ENCODE measurements at regions of chr7 and their contacts with region 1.

Region 1: GRCh38 chr7:40604601-40605438 is 470.0 kb downstream of the SUGCT start:
- DNase-seq: peak; percentile 27
- H3K4me3 Mint-ChIP-seq: no peak overlapping the region
- H3K27ac Mint-ChIP-seq: no peak overlapping the region
- H3K4me1 Mint-ChIP-seq: no peaks in the 10 kb centered on the region
- H3K27me3 Mint-ChIP-seq: no peaks in the 10 kb centered on the region

Region 2: DNA sequence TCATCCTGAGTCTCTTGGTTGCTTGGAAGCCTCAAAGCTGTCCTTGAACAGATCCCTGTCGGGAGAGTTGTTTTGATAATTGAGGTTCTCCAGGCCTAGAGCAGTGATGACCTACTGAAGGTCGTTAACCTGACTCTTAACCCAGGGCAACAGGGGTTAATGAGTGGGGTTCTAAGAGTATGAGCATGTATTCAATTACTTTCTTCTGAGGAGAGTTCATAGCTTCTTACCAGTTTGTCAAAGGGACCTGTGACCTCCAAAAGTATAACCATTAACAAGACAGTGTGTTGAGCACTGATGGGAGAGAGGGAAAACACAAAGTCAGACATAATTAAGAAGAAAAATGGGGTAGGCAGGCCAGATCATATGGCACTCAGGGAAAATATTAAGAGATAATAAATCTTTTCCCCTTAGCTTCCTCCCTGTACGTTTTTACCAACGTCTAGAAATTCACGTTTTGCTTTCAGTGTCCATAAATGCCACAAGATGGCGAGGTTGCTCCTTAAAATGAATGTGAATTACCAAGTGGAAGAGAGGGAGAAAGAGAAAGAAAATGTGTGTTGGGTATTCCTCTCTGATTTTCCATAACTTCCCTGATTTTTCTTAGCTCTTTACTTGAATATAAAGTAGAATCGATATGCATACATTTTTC is 372.5 kb before region 1 on chr7:
- CTCF ChIA-PET with region 1: interaction called, 14 read pairs
- DNase-seq: peak; percentile 34
- H3K4me3 Mint-ChIP-seq: no peak overlapping the region
- H3K27ac Mint-ChIP-seq: no peak overlapping the region
- H3K4me1 Mint-ChIP-seq: peaks cover 8% of the 10 kb centered on the region
- H3K27me3 Mint-ChIP-seq: no peaks in the 10 kb centered on the region

Region 3: DNA sequence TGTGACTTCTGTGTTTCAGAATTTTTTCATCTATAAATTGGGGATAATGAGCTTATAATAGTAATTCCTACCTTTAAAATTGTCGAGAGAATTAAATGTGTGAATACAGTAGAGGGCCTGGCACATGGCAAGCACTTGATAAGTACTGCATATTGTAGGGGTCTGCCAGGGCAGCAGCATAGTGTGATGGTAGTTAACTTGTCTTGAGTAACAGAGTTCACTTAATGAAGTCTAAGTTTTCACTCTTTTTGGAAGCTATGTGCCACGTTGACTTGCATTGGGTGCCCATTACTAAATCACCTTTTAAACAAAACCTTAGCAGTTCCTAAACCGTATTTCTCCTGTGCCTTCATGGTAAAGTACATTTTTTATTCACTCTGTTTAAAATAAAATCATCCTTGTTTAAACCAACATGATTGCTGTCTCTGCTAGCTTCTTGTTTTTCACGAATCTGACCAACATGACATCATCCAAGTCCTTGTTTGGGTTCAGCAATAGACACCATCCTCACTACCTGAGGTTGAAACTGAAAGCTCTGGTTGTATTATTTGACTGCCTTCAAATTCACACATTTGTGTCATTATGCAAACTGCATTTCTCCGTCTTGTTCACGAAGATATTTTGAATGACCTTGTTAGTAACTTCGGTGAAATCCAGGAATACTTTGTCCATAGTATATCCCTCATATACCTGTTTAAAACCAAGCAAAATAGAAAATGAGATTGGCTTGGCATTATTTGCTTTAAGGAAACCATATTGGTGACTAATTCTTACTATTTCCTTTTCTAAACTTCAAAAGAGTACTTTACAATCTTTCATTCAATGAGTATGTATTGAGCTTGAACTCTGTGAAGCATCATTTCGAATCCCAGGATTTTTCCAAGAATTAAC is 129.8 kb before region 1 on chr7:
- CTCF ChIA-PET with region 1: no interaction called
- DNase-seq: no peak
- H3K4me3 Mint-ChIP-seq: no peak overlapping the region
- H3K27ac Mint-ChIP-seq: no peak overlapping the region
- H3K4me1 Mint-ChIP-seq: peaks cover 12% of the 10 kb centered on the region
- H3K27me3 Mint-ChIP-seq: no peaks in the 10 kb centered on the region

Region 4: DNA sequence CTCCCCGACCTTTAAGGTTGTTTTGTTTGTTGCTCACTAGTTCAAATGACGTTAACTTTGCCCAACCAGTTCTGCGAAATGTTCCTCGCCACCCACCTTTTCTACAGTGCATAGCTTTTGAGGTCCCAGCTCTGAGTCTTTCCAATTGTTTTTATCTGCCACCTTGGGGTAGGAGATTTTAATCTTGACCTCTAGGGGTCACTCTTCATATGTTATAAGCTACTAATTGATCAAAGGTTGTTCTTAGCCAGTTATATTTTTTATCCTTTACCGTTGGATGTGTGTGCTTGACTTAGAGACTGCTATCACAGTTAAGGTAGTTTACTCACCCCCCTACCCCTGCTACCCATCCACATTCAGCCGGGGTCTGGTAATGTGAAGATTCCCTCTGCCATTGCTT is 97.7 kb before region 1 on chr7:
- CTCF ChIA-PET with region 1: interaction called, 14 read pairs
- DNase-seq: no peak
- H3K4me3 Mint-ChIP-seq: no peak overlapping the region
- H3K27ac Mint-ChIP-seq: no peak overlapping the region
- H3K4me1 Mint-ChIP-seq: no peaks in the 10 kb centered on the region
- H3K27me3 Mint-ChIP-seq: no peaks in the 10 kb centered on the region

Measured in activated naive CD4-positive, alpha-beta T cell treated with anti-CD3 and anti-CD28 coated beads, Interleukin-2, amount 10 ng/mL, durations not matched to agents 7 days and 5 days (primary cell).